ENCODE measurements at regions of chr5 and their contacts with region 1.

Region 1: DNA sequence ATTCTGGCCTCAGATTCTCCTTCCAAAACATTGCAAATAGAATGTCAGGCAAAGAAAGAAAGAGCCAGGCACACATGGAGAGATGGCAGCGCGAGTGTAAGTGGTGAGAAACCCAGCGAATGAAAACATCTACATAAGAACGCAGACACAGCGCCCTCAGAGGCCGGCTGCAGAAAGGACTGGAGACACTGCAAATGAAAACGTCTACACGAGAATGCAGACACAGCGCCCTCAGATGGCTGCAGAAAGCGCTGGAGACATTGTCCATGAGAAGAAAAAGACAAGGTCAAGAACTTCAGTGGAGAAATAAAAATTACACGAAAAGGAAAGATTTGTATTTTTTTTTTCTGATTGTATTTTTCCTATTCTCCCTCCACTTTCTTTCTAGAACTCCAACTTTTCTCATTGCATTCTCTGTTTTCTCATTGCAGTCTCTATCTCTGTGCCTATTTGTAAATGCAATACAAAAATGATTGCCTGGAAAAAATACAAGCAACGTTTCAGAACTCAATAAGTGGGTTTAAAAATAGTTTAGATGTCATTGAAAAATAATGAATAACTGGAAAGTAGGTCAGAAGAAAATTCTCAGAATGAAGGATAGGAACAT is 117.9 kb upstream of the LPCAT1 start:
- DNase-seq: peak; percentile 86
- H3K4me3 ChIP-seq: no peak overlapping the region
- H3K27ac ChIP-seq: no peak overlapping the region
- H3K4me1 ChIP-seq: peaks cover 0 to 12% (median 4%) of the 10 kb centered on the region in 4 donors
- H3K27me3 ChIP-seq: peaks cover 28% of the 10 kb centered on the region
- CTCF ChIP-seq: peak; percentile 73 to 88 (median 85)
- EP300 ChIP-seq: no peak
- POLR2A ChIP-seq: no peak

Region 2: GRCh38 chr5:1167728-1168709 is 473.6 kb before region 1 on chr5:
- in situ Hi-C with region 1: loop called in 2 of 4 experiments (anchors 10 kb)
- intact Hi-C with region 1: loop called (anchors 2 kb)
- DNase-seq: peak; percentile 78
- H3K4me3 ChIP-seq: peak overlapping the region in 1 of 4 donors; percentile 20
- H3K27ac ChIP-seq: no peak overlapping the region
- H3K4me1 ChIP-seq: peaks cover 0 to 7% (median 2%) of the 10 kb centered on the region in 4 donors
- H3K27me3 ChIP-seq: no peaks in the 10 kb centered on the region
- CTCF ChIP-seq: peak; percentile 66 to 77 (median 69)
- EP300 ChIP-seq: no peak
- POLR2A ChIP-seq: no peak

Region 3: GRCh38 chr5:1174122-1174936 is 467.3 kb before region 1 on chr5:
- in situ Hi-C with region 1: loop called in 3 of 4 experiments (anchors 10 to 25 kb)
- intact Hi-C with region 1: loop called (anchors 2 kb)
- DNase-seq: peak; percentile 70
- H3K4me3 ChIP-seq: no peak overlapping the region
- H3K27ac ChIP-seq: no peak overlapping the region
- H3K4me1 ChIP-seq: no peaks in the 10 kb centered on the region
- H3K27me3 ChIP-seq: peaks cover 4% of the 10 kb centered on the region
- CTCF ChIP-seq: peak; percentile 71 to 81 (median 71)
- EP300 ChIP-seq: no peak
- POLR2A ChIP-seq: no peak

Region 4: GRCh38 chr5:1182633-1183423 is 458.8 kb before region 1 on chr5:
- in situ Hi-C with region 1: loop called in 3 of 4 experiments (anchors 10 to 25 kb)
- intact Hi-C with region 1: no loop called
- DNase-seq: peak; percentile 58
- H3K4me3 ChIP-seq: peak overlapping the region in 1 of 4 donors; percentile 16
- H3K27ac ChIP-seq: peak overlapping the region in 3 of 4 donors; percentile 14 to 57 (median 38)
- H3K4me1 ChIP-seq: peaks cover 0 to 29% (median 25%) of the 10 kb centered on the region in 4 donors
- H3K27me3 ChIP-seq: peaks cover 5% of the 10 kb centered on the region
- CTCF ChIP-seq: no peak
- EP300 ChIP-seq: no peak
- POLR2A ChIP-seq: no peak

Region 5: GRCh38 chr5:1374680-1375055 is 267.0 kb before region 1 on chr5:
- in situ Hi-C with region 1: loop called in 2 of 4 experiments (anchors 25 kb)
- intact Hi-C with region 1: no loop called
- DNase-seq: no peak
- H3K4me3 ChIP-seq: no peak overlapping the region
- H3K27ac ChIP-seq: no peak overlapping the region
- H3K4me1 ChIP-seq: no peaks in the 10 kb centered on the region
- H3K27me3 ChIP-seq: peaks cover 5% of the 10 kb centered on the region
- CTCF ChIP-seq: no peak
- EP300 ChIP-seq: no peak
- POLR2A ChIP-seq: no peak

Region 6: DNA sequence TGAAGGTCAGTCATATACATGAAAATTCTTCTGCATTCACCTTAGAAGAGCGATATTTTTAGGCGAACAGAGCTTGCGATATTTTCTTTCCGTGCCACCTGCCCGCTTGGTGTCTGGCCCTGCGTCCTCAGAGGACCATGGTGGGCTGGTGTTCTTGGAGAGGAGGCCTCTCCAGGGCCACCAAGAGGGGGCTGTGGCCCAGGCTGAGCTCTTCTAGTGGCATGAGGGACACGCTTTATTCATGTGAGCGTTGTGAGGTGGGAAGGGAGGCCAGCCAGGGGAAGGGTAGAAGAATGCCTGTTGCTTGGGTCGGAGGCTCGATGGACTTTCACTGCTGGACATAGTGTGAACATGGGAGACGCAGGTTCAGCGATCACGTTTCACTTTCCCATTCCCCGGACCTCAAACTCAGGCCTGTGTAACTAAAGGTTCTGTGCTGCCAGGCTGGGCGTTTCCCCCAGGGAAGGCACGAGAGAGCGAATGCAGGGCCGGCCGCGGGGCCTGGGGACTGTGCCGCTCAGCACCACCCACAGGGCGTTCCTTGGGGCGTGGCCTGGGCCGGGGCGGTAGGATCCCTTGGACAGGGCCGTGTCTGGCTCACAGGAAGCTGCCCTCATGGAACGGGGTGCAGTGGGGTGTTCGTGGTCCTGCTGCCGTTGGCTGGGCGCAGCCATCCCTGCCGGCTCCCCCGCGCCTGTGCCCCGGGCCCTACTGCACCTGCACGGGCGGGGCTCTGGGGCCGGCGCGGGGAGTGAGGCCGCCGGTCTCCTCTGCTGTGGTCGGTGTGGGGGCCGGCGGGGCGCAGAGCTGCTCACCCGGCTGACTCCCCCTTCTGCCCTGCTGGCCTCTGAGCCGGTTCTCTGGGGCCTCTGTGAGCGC is 256.0 kb before region 1 on chr5:
- in situ Hi-C with region 1: loop called in 1 of 4 experiments (anchors 25 kb)
- intact Hi-C with region 1: loop called (anchors 5 kb)
- DNase-seq: peak; percentile 95
- H3K4me3 ChIP-seq: peak overlapping the region; percentile 21 to 78 (median 50)
- H3K27ac ChIP-seq: peak overlapping the region; percentile 67 to 85 (median 80)
- H3K4me1 ChIP-seq: peaks cover 0 to 20% (median 15%) of the 10 kb centered on the region in 4 donors
- H3K27me3 ChIP-seq: no peaks in the 10 kb centered on the region
- CTCF ChIP-seq: no peak
- EP300 ChIP-seq: no peak
- POLR2A ChIP-seq: peak; percentile 84

Region 7: GRCh38 chr5:1479581-1480188 is 162.0 kb before region 1 on chr5:
- in situ Hi-C with region 1: loop called in 1 of 4 experiments (anchors 25 kb)
- intact Hi-C with region 1: no loop called
- DNase-seq: peak; percentile 48
- H3K4me3 ChIP-seq: no peak overlapping the region
- H3K27ac ChIP-seq: peak overlapping the region in 3 of 4 donors; percentile 9 to 42 (median 40)
- H3K4me1 ChIP-seq: peaks cover 0 to 5% (median 0%) of the 10 kb centered on the region in 4 donors
- H3K27me3 ChIP-seq: no peaks in the 10 kb centered on the region
- CTCF ChIP-seq: peak; percentile 48 to 57 (median 52)
- EP300 ChIP-seq: no peak
- POLR2A ChIP-seq: no peak

Region 8: GRCh38 chr5:2185646-2186471 is 544.2 kb after region 1 on chr5:
- in situ Hi-C with region 1: no loop called
- intact Hi-C with region 1: no loop called
- DNase-seq: no peak
- H3K4me3 ChIP-seq: no peak overlapping the region
- H3K27ac ChIP-seq: no peak overlapping the region
- H3K4me1 ChIP-seq: no peaks in the 10 kb centered on the region
- H3K27me3 ChIP-seq: no peaks in the 10 kb centered on the region
- CTCF ChIP-seq: no peak
- EP300 ChIP-seq: no peak
- POLR2A ChIP-seq: no peak

Region 9: GRCh38 chr5:2642684-2643345 is 1001.2 kb after region 1 on chr5:
- in situ Hi-C with region 1: no loop called
- intact Hi-C with region 1: no loop called
- DNase-seq: no peak
- H3K4me3 ChIP-seq: no peak overlapping the region
- H3K27ac ChIP-seq: no peak overlapping the region
- H3K4me1 ChIP-seq: no peaks in the 10 kb centered on the region
- H3K27me3 ChIP-seq: no peaks in the 10 kb centered on the region
- CTCF ChIP-seq: no peak
- EP300 ChIP-seq: no peak
- POLR2A ChIP-seq: no peak